RWPE1 (cell line): ENCODE measurements at regions of chr9 and their contacts with region 1.

Region 1: GRCh38 chr9:91346652-91347051 is 15.1 kb downstream of the AUH start:
- DNase-seq: peak; percentile 61
- H3K27ac ChIP-seq: no peak overlapping the region
- CTCF ChIP-seq: no peak

Region 2: DNA sequence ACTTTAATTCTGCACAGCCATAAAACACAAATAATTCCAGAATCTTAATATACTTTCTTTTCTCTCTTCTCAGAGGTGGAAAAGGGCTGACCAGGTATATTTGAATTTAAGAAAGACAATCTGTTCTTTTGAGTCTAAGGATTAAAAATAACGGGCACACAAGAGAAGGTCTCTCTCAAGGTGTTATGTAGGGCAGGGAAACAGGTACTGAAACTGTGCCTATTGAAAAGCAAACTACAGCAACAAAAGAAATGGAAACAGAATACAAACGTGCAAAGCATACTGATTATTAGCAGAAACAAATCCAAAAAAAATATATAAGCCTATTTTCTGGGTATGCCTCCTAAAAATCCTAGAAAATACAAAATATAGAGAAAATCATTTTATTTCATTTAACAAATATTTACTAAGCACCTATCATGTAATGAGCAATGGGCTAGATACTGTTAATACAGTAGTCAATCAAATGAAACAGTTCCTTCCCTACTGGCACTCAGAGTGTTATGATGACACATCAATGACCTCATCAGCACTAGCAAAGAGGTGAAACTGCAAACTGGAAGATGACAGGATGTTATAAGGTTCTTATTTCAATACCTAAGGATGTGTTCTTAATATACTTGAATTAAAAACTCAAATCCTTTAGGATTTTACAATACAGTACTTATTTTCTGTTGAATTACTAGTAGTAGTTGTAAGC is 72.6 kb before region 1 on chr9:
- CTCF ChIA-PET with region 1: no interaction called
- POLR2A ChIA-PET with region 1: no interaction called
- DNase-seq: peak; percentile 72
- H3K27ac ChIP-seq: no peak overlapping the region
- CTCF ChIP-seq: no peak

Region 3: DNA sequence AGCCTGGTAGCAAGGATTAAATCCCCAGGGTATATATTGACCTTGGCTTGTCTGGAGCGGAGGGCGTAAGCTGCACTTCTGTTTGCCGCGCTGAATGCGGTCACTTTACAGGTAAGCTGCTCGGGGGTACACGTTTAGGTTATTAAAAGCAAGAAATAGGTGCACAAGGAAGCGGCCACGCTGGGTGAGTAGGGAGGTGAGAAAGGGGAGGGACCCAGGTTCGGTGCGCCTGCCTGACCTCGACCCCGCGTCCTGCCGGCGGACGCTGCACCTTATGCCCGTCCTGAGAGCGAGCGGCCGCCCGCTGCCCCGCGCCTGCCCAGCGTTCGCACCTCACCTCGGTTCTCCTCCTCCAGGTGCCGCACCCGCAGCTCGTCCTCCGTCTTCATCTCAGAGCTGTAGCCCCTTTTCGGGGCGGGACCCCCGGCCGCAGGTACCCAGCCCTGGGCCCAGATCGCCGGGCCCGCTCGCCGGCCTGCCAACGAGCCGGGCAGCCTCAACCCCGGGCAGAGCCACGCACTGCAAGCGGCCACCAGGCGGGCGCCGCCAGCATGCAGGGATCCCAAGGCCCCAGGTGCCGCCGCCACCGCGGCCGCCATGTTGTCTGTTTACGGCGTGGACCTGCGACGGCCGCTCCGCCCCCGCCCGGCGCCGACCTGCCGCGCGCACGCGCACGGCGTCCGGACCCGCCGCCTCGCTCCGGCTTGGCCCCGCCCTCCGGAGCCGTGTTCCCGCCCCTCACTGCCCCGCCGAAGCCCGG is 14.8 kb after region 1 on chr9 and contains the start of gene AUH:
- CTCF ChIA-PET with region 1: interaction called, 13 read pairs
- POLR2A ChIA-PET with region 1: interaction called, 5 read pairs
- DNase-seq: peak; percentile 99
- H3K27ac ChIP-seq: peak within 1 kb of the TSS; percentile 77
- CTCF ChIP-seq: no peak